IMR-90 (cell line): ENCODE measurements at regions of chr2 and their contacts with region 1.

Region 1: GRCh38 chr2:41267929-41268836 is 779.6 kb upstream of the PKDCC start:
- DNase-seq: no peak
- ATAC-seq: no peak
- H3K4me3 ChIP-seq: no peak overlapping the region
- H3K27ac ChIP-seq: no peak overlapping the region
- H3K4me1 ChIP-seq: no peaks in the 10 kb centered on the region
- H3K27me3 ChIP-seq: no peaks in the 10 kb centered on the region
- CTCF ChIP-seq: no peak
- POLR2A ChIP-seq: no peak
- RAD21 ChIP-seq: no peak

Region 2: GRCh38 chr2:40480073-40480472 is 788.1 kb before region 1 on chr2:
- CTCF ChIA-PET with region 1: no interaction called
- POLR2A ChIA-PET with region 1: no interaction called
- dilution Hi-C with region 1: no loop called
- in situ Hi-C with region 1: no loop called
- intact Hi-C with region 1: loop called (anchors 5 kb)
- DNase-seq: no peak
- ATAC-seq: no peak
- H3K4me3 ChIP-seq: no peak overlapping the region
- H3K27ac ChIP-seq: no peak overlapping the region
- H3K4me1 ChIP-seq: no peaks in the 10 kb centered on the region
- H3K27me3 ChIP-seq: no peaks in the 10 kb centered on the region
- CTCF ChIP-seq: no peak
- POLR2A ChIP-seq: no peak
- RAD21 ChIP-seq: no peak

Region 3: GRCh38 chr2:41429122-41429521 is 160.9 kb after region 1 on chr2:
- CTCF ChIA-PET with region 1: no interaction called
- POLR2A ChIA-PET with region 1: no interaction called
- dilution Hi-C with region 1: no loop called
- in situ Hi-C with region 1: no loop called
- intact Hi-C with region 1: no loop called
- DNase-seq: no peak
- ATAC-seq: no peak
- H3K4me3 ChIP-seq: no peak overlapping the region
- H3K27ac ChIP-seq: no peak overlapping the region
- H3K4me1 ChIP-seq: no peaks in the 10 kb centered on the region
- H3K27me3 ChIP-seq: no peaks in the 10 kb centered on the region
- CTCF ChIP-seq: no peak
- POLR2A ChIP-seq: no peak
- RAD21 ChIP-seq: no peak